Sciatic nerve (tissue), 2 donors: ENCODE measurements at regions of chr6 and their contacts with region 1.

Region 1: DNA sequence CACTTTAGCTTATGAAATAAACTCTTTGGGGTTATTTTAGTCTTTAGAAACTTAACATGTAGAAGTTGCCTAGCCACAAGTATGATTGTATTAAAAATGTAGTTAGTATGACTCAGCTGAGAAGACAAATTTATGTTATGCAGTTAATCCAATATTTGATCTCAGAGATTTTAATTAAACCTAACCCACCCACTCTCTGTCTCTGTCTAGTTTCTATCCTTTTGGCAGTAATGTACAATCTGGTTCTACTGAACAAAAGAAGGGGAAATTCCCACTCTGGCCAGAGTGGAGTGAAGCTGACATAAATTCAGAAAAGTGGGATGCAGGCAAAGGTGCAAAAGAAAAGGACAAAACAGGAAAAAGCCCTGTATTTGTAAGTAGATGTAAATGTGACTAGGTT is 36.4 kb downstream of the ADGB start:
- DNase-seq: no peak
- ATAC-seq: no peak

Region 2: GRCh38 chr6:145904868-145905267 is 730.3 kb before region 1 on chr6:
- intact Hi-C with region 1: no loop called
- DNase-seq: no peak
- ATAC-seq: peak; percentile 49

Region 3: GRCh38 chr6:146670161-146670560 is 35.0 kb after region 1 on chr6:
- intact Hi-C with region 1: loop called (anchors 5 kb)
- DNase-seq: no peak
- ATAC-seq: no peak